OCI-LY7 (cell line): ENCODE measurements at regions of chr16 and their contacts with region 1.

Region 1: GRCh38 chr16:29790183-29790952 is at the start of gene KIF22:
- DNase-seq: peak; percentile 99
- H3K4me3 ChIP-seq: peak within 1 kb of the TSS; percentile 79
- H3K27ac ChIP-seq: peak within 1 kb of the TSS; percentile 72
- H3K4me1 ChIP-seq: peaks cover 32% of the 10 kb centered on the region
- CTCF ChIP-seq: peak; percentile 82
- total RNA-seq, gene KIF22: 315 and 339 TPM in 2 replicates

Region 2: GRCh38 chr16:29678691-29679267 is 111.6 kb before region 1 on chr16 and contains the start of gene QPRT:
- CTCF ChIA-PET with region 1: no interaction called
- POLR2A ChIA-PET with region 1: no interaction called
- intact Hi-C with region 1: no loop called
- DNase-seq: peak; percentile 31
- H3K4me3 ChIP-seq: peak within 1 kb of the TSS; percentile 68
- H3K27ac ChIP-seq: peak within 1 kb of the TSS; percentile 79
- H3K4me1 ChIP-seq: peaks cover 28% of the 10 kb centered on the region
- CTCF ChIP-seq: no peak
- total RNA-seq, gene QPRT: 9.4 and 10.6 TPM in 2 replicates

Region 3: DNA sequence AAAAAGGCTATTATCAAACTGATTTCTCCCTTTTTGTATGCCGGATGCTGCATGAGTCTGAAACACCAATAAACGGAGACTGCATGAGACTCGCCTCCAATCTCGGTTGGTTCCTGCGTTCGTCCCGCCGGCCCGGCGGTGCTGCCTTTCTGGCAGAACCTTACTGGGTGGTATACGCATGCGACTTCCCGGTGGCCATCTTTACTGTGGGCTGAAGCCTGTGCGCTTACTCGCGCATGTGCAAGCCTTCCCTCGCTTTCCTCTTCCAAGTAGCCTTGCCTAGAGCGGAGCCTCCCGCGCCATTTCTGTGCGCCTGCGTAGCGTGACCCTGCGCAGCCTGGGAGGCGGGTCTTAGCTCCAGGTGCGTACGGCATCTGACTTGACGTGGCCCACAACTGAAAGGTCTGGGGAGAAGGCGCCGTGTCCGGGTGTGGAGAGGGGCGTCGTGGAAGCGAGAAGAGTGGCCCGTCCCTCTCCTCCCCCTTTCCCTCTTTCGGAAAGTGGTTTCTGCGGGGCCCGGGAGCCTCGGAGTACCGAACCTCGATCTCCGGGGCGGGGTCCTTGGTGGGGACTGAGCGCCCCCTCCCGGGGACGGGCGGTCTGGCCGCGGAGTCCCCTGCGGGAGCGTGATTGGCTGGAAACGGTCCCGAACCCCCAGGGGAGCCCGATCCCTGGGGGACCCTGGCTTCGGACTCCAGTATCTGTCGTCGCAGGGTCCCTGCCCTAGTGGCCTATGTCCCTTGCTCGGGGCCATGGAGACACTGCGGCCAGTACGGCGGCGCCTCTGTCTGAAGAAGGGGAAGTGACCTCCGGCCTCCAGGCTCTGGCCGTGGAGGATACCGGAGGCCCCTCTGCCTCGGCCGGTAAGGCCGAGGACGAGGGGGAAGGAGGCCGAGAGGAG is 25.7 kb after region 1 on chr16 and contains the start of gene PAGR1:
- CTCF ChIA-PET with region 1: interaction called, 4 read pairs
- POLR2A ChIA-PET with region 1: interaction called, 3 read pairs
- intact Hi-C with region 1: loop called (anchors 1 kb)
- DNase-seq: peak; percentile 100
- H3K4me3 ChIP-seq: peak within 1 kb of the TSS; percentile 89
- H3K27ac ChIP-seq: peak within 1 kb of the TSS; percentile 72
- H3K4me1 ChIP-seq: peaks cover 56% of the 10 kb centered on the region
- CTCF ChIP-seq: peak; percentile 87
- total RNA-seq, gene PAGR1: 59.4 and 62.7 TPM in 2 replicates